ENCODE measurements at regions of chr1 and their contacts with region 1.

Region 1: GRCh38 chr1:44225761-44226160 is 12.5 kb downstream of the DMAP1 start:
- DNase-seq: no peak
- ATAC-seq: no peak
- H3K4me3 ChIP-seq: no peak overlapping the region
- H3K27ac ChIP-seq: no peak overlapping the region
- H3K4me1 ChIP-seq: no peaks in the 10 kb centered on the region
- H3K27me3 ChIP-seq: no peaks in the 10 kb centered on the region
- CTCF ChIP-seq: no peak

Region 2: DNA sequence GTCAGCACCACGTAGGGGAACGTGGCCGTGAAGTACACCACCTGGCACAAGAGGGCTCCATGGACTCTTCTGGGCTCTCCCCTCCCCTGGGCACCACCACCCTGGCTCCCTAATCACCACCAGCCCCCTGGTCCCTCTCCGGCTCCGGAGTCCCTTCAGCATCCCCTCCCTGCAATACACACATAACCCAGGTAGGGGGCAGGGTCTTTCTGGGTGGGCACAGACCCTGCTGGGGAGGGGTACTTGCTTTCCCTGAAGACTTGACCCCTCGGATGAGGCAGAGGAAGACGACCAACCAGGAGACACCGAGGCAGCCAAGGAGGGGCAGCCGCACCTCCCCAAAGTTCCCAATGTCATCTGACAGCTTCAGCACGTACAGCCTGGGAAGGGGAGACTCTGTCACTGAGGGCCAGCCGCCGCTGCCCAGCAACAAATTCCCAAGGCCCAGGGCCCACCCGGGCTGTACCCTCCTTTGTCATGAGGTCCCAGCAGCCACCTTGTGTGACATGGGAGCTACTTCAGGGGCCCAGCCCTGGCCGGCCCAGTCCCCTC is 223.1 kb before region 1 on chr1:
- CTCF ChIA-PET with region 1: no interaction called
- POLR2A ChIA-PET with region 1: no interaction called
- in situ Hi-C with region 1: no loop called
- intact Hi-C with region 1: no loop called
- DNase-seq: no peak
- ATAC-seq: no peak
- H3K4me3 ChIP-seq: no peak overlapping the region
- H3K27ac ChIP-seq: no peak overlapping the region
- H3K4me1 ChIP-seq: peaks cover 2% of the 10 kb centered on the region; the same call in 1 of the 2 replicates
- H3K27me3 ChIP-seq: no peaks in the 10 kb centered on the region
- CTCF ChIP-seq: no peak; the same call in 1 of the 2 replicates

Region 3: GRCh38 chr1:44652445-44653106 is 426.8 kb after region 1 on chr1:
- CTCF ChIA-PET with region 1: no interaction called
- POLR2A ChIA-PET with region 1: interaction called, 13 read pairs
- in situ Hi-C with region 1: no loop called
- intact Hi-C with region 1: no loop called
- DNase-seq: peak; percentile 71
- ATAC-seq: peak; percentile 92
- H3K4me3 ChIP-seq: no peak overlapping the region
- H3K27ac ChIP-seq: 0 out of 2 replicates have a peak overlapping the region, but pooled peaks have one; percentile 24
- H3K4me1 ChIP-seq: no peaks in the 10 kb centered on the region
- H3K27me3 ChIP-seq: no peaks in the 10 kb centered on the region
- CTCF ChIP-seq: peak; percentile 97